ENCODE measurements at regions of chr10 and their contacts with region 1.

Region 1: GRCh38 chr10:60123172-60124067 is 217.1 kb upstream of the CCDC6 start:
- DNase-seq: no peak
- ATAC-seq: peak; percentile 93

Region 2: GRCh38 chr10:60155943-60156683 is 32.7 kb after region 1 on chr10:
- intact Hi-C with region 1: loop called (anchors 1 kb)
- DNase-seq: no peak
- ATAC-seq: peak; percentile 82